Activated naive CD4-positive, alpha-beta T cell treated with anti-CD3 and anti-CD28 coated beads for 36 hours (primary cell): ENCODE measurements at regions of chr17 and their contacts with region 1.

Region 1: GRCh38 chr17:32519228-32520103 is 32.7 kb downstream of the CDK5R1 start:
- DNase-seq: peak; percentile 85
- H3K4me3 Mint-ChIP-seq: peak overlapping the region; percentile 73
- H3K27ac Mint-ChIP-seq: peak overlapping the region; percentile 92
- H3K4me1 Mint-ChIP-seq: peaks cover 88% of the 10 kb centered on the region
- H3K27me3 Mint-ChIP-seq: no peaks in the 10 kb centered on the region

Region 2: GRCh38 chr17:32444308-32445073 is 75.0 kb before region 1 on chr17 and contains the start of gene PSMD11:
- CTCF ChIA-PET with region 1: interaction called, 3 read pairs
- intact Hi-C with region 1: loop called (anchors 1 kb)
- DNase-seq: peak; percentile 98
- H3K4me3 Mint-ChIP-seq: peak within 1 kb of the TSS; percentile 93
- H3K27ac Mint-ChIP-seq: peak within 1 kb of the TSS; percentile 89
- H3K4me1 Mint-ChIP-seq: peaks cover 25% of the 10 kb centered on the region
- H3K27me3 Mint-ChIP-seq: peaks cover 5% of the 10 kb centered on the region
- total RNA-seq, gene PSMD11: 132 to 145 TPM

Region 3: GRCh38 chr17:32486111-32486700 is 33.3 kb before region 1 on chr17:
- CTCF ChIA-PET with region 1: interaction called, 22 read pairs
- intact Hi-C with region 1: loop called (anchors 1 kb)
- DNase-seq: peak; percentile 70
- H3K4me3 Mint-ChIP-seq: peak overlapping the region; percentile 45
- H3K27ac Mint-ChIP-seq: no peak overlapping the region
- H3K4me1 Mint-ChIP-seq: peaks cover 47% of the 10 kb centered on the region
- H3K27me3 Mint-ChIP-seq: no peaks in the 10 kb centered on the region

Region 4: GRCh38 chr17:32503251-32504165 is 16.0 kb before region 1 on chr17:
- CTCF ChIA-PET with region 1: interaction called, 4 read pairs
- intact Hi-C with region 1: loop called (anchors 1 kb)
- DNase-seq: peak; percentile 83
- H3K4me3 Mint-ChIP-seq: peak overlapping the region; percentile 47
- H3K27ac Mint-ChIP-seq: peak overlapping the region; percentile 97
- H3K4me1 Mint-ChIP-seq: peaks cover 76% of the 10 kb centered on the region
- H3K27me3 Mint-ChIP-seq: no peaks in the 10 kb centered on the region

Region 5: DNA sequence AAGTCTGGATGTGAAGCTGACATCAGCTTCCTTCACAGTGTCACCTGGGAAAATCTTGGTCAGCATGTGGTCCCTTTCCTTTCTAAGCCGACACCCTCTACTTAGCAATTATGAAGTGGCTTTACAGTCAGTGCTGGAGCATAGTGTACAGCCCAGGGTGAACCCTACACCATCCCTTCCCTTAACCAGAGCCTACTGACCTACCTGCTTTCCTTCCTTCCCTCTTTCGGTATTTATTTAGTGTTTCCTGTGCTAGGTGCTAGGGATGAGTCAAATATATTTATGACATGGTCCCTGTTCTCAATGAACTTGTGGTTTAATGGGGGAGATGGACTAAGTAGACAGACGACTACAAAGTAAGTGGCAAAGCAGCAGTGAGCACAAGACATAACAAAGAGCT is 44.9 kb after region 1 on chr17:
- CTCF ChIA-PET with region 1: interaction called, 3 read pairs
- intact Hi-C with region 1: loop called (anchors 1 kb)
- DNase-seq: peak; percentile 66
- H3K4me3 Mint-ChIP-seq: no peak overlapping the region
- H3K27ac Mint-ChIP-seq: peak overlapping the region; percentile 16
- H3K4me1 Mint-ChIP-seq: peaks cover 25% of the 10 kb centered on the region
- H3K27me3 Mint-ChIP-seq: no peaks in the 10 kb centered on the region

Region 6: DNA sequence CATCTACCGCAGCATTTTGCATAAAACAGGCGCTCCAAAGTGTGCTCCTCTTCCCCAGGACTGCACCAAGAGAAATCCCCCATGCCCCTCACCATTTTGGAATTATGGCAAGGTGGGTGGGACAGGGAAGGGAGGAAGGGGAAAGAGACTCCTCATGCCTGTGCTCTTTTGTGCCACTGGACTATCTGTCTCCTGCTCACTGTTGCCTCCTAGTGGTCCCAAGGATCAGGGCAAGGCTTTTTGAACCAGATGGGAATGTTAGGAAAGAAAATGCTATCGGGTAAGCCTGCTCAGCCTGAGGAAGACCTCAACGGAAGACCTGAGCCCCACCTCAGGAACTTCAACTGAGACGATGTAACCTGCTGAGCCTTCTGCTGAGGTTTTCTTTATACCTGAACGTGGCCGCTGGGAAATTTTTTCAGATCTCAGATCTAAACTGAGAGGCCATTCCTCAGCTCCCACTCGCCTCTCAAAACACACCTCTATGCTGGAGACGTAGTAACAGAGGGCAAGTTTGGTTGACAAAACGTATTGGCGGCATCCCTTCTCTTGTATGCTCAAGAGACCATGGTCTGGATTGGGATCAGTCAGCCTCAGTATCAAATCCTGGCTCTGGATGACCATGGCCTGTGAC is 530.4 kb after region 1 on chr17:
- CTCF ChIA-PET with region 1: no interaction called
- intact Hi-C with region 1: no loop called
- DNase-seq: peak; percentile 58
- H3K4me3 Mint-ChIP-seq: no peak overlapping the region
- H3K27ac Mint-ChIP-seq: no peak overlapping the region
- H3K4me1 Mint-ChIP-seq: no peaks in the 10 kb centered on the region
- H3K27me3 Mint-ChIP-seq: peaks cover 10% of the 10 kb centered on the region